Posterior vena cava (tissue), 2 donors: ENCODE measurements at regions of chr3 and their contacts with region 1.

Region 1: GRCh38 chr3:10164546-10165393 is at the start of gene IRAK2:
- DNase-seq: peak; percentile 93
- total RNA-seq, gene IRAK2: 2.3 to 4.2 TPM

Region 2: GRCh38 chr3:9649791-9650521 is 514.8 kb before region 1 on chr3:
- intact Hi-C with region 1: no loop called
- DNase-seq: no peak

Region 3: GRCh38 chr3:10224784-10225665 is 60.3 kb after region 1 on chr3:
- intact Hi-C with region 1: loop called in 1 of 2 experiments (anchors 2 kb)
- DNase-seq: peak; percentile 84

Region 4: DNA sequence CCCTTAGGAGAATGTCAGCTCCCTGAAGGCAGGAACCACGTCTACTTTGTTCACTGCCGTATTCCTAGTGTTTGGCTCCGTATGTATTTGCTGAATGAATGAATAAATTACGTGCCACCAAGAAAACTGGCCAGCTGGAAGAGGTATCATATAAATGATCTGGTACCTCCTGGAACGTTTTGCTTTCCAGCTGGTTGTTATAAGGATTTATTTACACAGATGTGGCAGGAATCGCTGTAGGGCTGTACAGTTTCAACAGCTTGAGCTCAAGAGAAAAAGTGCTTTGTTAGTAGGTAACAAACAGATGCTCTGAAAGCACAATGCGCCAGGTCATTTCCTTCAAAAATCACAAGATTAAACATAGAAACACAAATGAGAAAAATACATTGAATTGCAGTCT is 449.4 kb after region 1 on chr3:
- intact Hi-C with region 1: no loop called
- DNase-seq: peak; percentile 3